ENCODE measurements at regions of chr6 and their contacts with region 1.

Region 1: GRCh38 chr6:107704347-107705013 is 119.6 kb downstream of the SCML4 start:
- DNase-seq: no peak
- H3K4me3 ChIP-seq: no peak overlapping the region
- H3K27ac ChIP-seq: no peak overlapping the region
- H3K4me1 ChIP-seq: no peaks in the 10 kb centered on the region
- H3K27me3 ChIP-seq: no peaks in the 10 kb centered on the region
- CTCF ChIP-seq: peak; percentile 68 to 82 (median 72)
- POLR2A ChIP-seq: no peak

Region 2: DNA sequence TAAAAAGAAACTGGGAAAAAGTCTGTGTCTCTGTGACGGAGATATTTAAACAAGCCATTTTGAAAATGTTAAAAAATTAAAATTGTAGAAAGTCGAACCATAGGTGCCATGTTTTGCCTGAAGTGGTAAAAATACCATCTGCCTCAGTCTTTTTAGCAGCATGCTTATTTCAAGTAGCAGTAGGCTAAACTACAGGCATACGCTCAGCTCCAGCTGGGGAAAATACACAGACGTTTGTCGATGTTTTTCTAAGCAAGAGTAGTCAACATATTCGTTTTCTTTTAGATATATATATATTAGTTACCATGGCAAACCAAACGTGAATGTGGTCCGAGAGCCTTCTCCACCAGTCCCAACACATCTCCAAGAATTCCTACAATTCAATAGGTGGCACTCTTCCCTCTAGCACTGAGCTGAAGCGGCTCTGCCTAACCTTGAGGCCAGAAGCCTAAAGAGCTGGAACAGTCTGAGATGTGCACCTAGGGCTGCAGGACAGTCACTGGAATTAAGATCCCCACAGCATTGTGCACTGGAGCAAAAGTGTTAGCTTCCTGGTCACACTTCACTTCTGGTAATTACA is 519.0 kb before region 1 on chr6:
- intact Hi-C with region 1: loop called (anchors 10 kb)
- DNase-seq: peak; percentile 42
- H3K4me3 ChIP-seq: no peak overlapping the region
- H3K27ac ChIP-seq: no peak overlapping the region
- H3K4me1 ChIP-seq: no peaks in the 10 kb centered on the region
- H3K27me3 ChIP-seq: no peaks in the 10 kb centered on the region
- CTCF ChIP-seq: peak; percentile 14 to 56 (median 30)
- POLR2A ChIP-seq: no peak

Region 3: GRCh38 chr6:107318100-107318736 is 386.3 kb before region 1 on chr6:
- intact Hi-C with region 1: loop called (anchors 5 kb)
- DNase-seq: peak; percentile 16
- H3K4me3 ChIP-seq: no peak overlapping the region
- H3K27ac ChIP-seq: no peak overlapping the region
- H3K4me1 ChIP-seq: peaks cover 6% of the 10 kb centered on the region
- H3K27me3 ChIP-seq: no peaks in the 10 kb centered on the region
- CTCF ChIP-seq: peak in 3 of 4 experiments; percentile 28 to 42 (median 38)
- POLR2A ChIP-seq: no peak

Region 4: DNA sequence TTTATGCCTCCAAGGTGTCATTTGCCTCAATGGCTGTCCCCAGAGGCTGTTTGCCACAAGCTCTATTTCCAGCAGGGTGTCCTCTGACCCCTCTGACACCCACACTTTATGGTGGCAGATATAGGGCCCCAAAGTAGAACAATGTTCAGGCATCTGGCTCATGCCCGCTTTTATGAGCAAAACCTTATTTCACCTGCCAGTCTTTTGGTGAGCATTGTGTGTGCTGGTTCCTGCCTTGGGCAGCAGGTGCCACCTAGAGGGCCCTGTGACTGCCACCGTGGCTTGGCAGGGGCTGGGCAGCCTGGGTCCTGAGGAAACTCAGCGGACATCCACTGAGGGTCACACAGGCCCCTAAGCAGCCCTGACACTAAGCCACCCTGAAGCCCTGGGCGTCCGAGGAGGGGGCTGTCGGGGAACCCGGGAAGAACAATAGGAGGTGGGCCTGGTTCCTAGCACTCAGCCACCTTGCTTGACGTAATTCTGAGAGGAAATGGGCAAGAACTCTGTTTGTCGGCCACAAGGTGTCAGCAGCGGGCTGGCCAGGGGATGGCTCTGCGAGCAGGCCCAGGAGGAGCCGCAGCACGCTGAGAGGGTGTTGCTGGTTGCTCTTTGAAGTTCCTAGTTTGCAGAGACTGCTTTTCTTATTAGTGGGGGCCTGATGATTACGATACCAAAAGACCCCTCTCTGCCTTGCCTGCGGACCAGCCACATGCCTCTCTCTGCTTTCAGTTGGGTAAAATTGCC is 29.3 kb before region 1 on chr6:
- intact Hi-C with region 1: loop called (anchors 2 kb)
- DNase-seq: peak; percentile 73
- H3K4me3 ChIP-seq: peak overlapping the region in 1 of 2 donors; percentile 7
- H3K27ac ChIP-seq: peak overlapping the region; percentile 48 to 66
- H3K4me1 ChIP-seq: no peaks in the 10 kb centered on the region
- H3K27me3 ChIP-seq: no peaks in the 10 kb centered on the region
- CTCF ChIP-seq: peak; percentile 37 to 91 (median 89)
- POLR2A ChIP-seq: no peak